IMR-90 (cell line): ENCODE measurements at regions of chr10 and their contacts with region 1.

Region 1: DNA sequence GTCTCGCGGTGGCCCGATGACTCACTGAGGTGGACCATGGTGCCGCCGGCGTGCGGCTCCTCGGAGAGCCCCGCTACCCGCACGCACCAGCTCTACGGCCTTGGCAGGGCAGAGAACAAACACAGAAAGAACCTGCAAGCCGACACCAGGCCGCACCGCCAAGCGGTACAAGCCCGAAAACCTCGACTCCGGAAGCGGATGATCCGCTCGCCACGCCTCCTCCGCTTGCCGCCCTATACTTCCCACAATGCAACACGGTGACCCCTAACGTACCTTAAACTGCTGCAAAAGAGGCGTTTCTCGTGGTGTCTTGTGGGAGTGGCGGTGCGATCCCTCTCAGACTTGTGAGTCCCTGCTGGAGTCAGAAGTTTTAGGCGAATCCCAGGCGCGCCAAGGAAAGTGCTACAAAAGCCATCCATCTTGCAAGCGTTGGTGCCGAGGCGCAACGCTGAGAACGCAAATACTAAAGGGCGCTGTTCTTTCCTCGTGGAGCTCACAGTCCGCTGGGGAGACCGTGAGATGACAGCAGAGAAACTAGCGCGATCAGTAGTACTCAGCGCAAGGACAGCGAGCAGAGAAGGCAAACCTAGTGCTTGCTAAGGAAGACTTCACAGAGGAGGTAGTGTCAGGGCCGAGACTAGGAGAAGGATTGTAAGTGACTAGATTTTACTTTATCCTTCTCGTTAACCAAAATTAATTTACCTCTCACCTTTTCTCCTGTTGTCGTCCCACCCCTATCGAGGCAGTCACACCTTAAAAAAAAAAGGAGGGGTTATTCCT is at the start of gene MRPS16:
- DNase-seq: peak; percentile 96
- ATAC-seq: peak; percentile 97
- H3K4me3 ChIP-seq: peak within 1 kb of the TSS; percentile 54
- H3K27ac ChIP-seq: peak within 1 kb of the TSS; percentile 93
- H3K4me1 ChIP-seq: peaks cover 8% of the 10 kb centered on the region
- H3K27me3 ChIP-seq: no peaks in the 10 kb centered on the region
- CTCF ChIP-seq: no peak
- POLR2A ChIP-seq: peak; percentile 80; the same call in 1 of the 2 replicates
- RAD21 ChIP-seq: no peak
- total RNA-seq, gene MRPS16: 45.3 and 66.1 TPM in 2 replicates

Region 2: GRCh38 chr10:73358331-73359279 is 106.0 kb after region 1 on chr10 and contains the start of gene CFAP70:
- CTCF ChIA-PET with region 1: no interaction called
- POLR2A ChIA-PET with region 1: interaction called, 4 read pairs
- dilution Hi-C with region 1: no loop called
- in situ Hi-C with region 1: no loop called
- intact Hi-C with region 1: loop called (anchors 1 kb)
- DNase-seq: peak; percentile 95
- ATAC-seq: peak; percentile 100
- H3K4me3 ChIP-seq: peak within 1 kb of the TSS; percentile 71
- H3K27ac ChIP-seq: peak within 1 kb of the TSS; percentile 8; the same call in 1 of the 2 replicates
- H3K4me1 ChIP-seq: no peaks in the 10 kb centered on the region
- H3K27me3 ChIP-seq: peaks cover 14% of the 10 kb centered on the region; the same call in 1 of the 2 replicates
- CTCF ChIP-seq: no peak
- POLR2A ChIP-seq: no peak
- RAD21 ChIP-seq: no peak
- total RNA-seq, gene CFAP70: 0.18 and 0.28 TPM in 2 replicates

Region 3: DNA sequence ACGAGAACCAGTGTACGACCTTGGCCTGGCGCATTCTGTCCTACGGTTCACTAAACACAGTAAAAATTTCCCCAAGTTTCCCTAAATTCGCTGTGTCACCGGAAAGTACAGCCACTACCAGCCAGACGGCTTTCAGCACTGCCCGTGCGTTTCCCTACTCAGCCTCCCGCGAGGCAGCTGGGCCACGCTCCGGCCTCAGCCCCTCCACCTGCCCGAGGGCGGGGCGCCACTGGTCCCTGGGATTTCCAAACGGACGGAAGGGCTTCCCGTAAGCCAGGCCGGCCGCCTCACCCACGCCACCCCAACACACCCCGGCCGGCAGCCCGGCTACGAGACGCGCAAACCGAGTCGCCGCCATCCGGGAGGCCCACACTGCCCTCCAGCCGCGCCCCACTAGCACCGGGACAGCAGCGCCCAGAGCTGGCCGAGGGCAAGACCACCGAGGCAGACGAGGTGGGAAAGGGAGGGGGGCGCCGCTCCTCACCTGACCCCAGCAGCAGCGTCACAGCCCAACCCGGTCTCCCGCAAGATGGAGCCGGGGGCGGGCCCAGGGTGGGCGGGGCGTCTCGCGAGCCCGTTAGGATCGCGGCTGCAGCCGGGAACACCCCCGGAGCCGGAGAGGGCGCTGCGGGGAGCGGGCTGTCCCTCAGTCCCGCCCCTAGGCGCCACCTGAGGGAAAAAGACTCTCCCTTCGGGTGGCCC is 161.0 kb after region 1 on chr10 and contains the start of gene ANXA7:
- CTCF ChIA-PET with region 1: no interaction called
- POLR2A ChIA-PET with region 1: interaction called, 14 read pairs
- dilution Hi-C with region 1: no loop called
- in situ Hi-C with region 1: no loop called
- intact Hi-C with region 1: no loop called
- DNase-seq: peak; percentile 75
- ATAC-seq: peak; percentile 99
- H3K4me3 ChIP-seq: peak within 1 kb of the TSS; percentile 85
- H3K27ac ChIP-seq: peak within 1 kb of the TSS; percentile 85
- H3K4me1 ChIP-seq: no peaks in the 10 kb centered on the region
- H3K27me3 ChIP-seq: no peaks in the 10 kb centered on the region
- CTCF ChIP-seq: peak; percentile 30
- POLR2A ChIP-seq: peak; percentile 81
- RAD21 ChIP-seq: no peak
- total RNA-seq, gene ANXA7: 102 and 120 TPM in 2 replicates

Region 4: DNA sequence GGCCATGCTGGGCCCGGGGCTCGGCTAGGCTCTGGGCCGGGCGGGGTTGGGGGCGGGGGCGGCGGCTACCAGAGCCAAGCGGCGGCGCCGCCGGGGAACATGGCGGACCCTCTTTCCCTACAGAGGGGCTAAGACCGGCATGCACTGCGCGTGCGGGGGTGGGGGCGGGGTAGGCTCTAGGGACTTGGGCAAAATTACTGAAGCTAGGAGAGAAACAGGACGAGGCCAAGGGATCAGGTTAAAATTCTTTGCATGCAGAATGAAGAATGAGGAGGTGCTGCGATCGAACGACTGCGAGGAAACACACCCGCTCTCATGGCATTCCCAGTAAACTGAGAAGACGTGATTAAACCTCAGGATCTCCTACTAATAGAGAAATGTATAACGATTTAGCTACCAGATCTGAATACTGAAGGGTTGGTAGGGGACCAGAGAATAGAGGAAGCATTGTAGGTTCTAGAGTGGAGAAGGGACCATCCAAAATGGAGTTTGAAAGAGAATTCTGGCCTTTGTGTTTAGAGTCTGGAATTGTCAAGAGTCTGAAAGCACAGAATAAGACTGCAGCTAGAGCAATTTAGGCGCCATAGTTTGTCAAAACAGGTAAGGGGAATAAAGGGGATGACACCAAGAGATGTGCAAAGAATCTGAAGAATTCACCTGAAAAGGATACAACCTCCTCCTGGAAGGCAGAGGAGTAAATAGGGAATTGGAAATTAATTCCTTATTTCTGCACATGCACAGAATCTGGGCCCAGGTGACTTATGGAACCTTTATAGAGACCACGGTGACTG is 243.4 kb after region 1 on chr10 and contains the start of gene PPP3CB:
- CTCF ChIA-PET with region 1: no interaction called
- POLR2A ChIA-PET with region 1: no interaction called
- dilution Hi-C with region 1: no loop called
- in situ Hi-C with region 1: no loop called
- intact Hi-C with region 1: loop called (anchors 10 kb)
- DNase-seq: peak; percentile 97
- ATAC-seq: peak; percentile 88
- H3K4me3 ChIP-seq: peak within 1 kb of the TSS; percentile 90
- H3K27ac ChIP-seq: peak within 1 kb of the TSS; percentile 95
- H3K4me1 ChIP-seq: peaks cover 7% of the 10 kb centered on the region; the same call in 1 of the 2 replicates
- H3K27me3 ChIP-seq: no peaks in the 10 kb centered on the region
- CTCF ChIP-seq: no peak
- POLR2A ChIP-seq: no peak
- RAD21 ChIP-seq: no peak
- total RNA-seq, gene PPP3CB: 22.9 and 40.0 TPM in 2 replicates

Region 5: GRCh38 chr10:73625884-73626752 is 373.5 kb after region 1 on chr10:
- CTCF ChIA-PET with region 1: no interaction called
- POLR2A ChIA-PET with region 1: no interaction called
- dilution Hi-C with region 1: no loop called
- in situ Hi-C with region 1: loop called (anchors 25 kb)
- intact Hi-C with region 1: no loop called
- DNase-seq: peak; percentile 98
- ATAC-seq: peak; percentile 96
- H3K4me3 ChIP-seq: peak overlapping the region; percentile 67
- H3K27ac ChIP-seq: peak overlapping the region; percentile 92
- H3K4me1 ChIP-seq: 0 out of 2 replicates have a peak, but pooled peaks cover 1% of the 10 kb centered on the region
- H3K27me3 ChIP-seq: no peaks in the 10 kb centered on the region
- CTCF ChIP-seq: no peak
- POLR2A ChIP-seq: peak; percentile 88
- RAD21 ChIP-seq: no peak